Activated CD8-positive, alpha-beta T cell treated with anti-CD3 and anti-CD28 coated beads, Interleukin-2, amount 10 ng/mL, durations not matched to agents 7 days and 5 days (primary cell): ENCODE measurements at regions of chr21 and their contacts with region 1.

Region 1: GRCh38 chr21:33238565-33239255 is 9.0 kb downstream of the IFNAR2 start:
- DNase-seq: peak; percentile 23
- ATAC-seq: peak; percentile 54
- H3K4me3 Mint-ChIP-seq: peak overlapping the region; percentile 56
- H3K27ac Mint-ChIP-seq: peak overlapping the region; percentile 87
- H3K4me1 Mint-ChIP-seq: peaks cover 74% of the 10 kb centered on the region
- H3K27me3 Mint-ChIP-seq: no peaks in the 10 kb centered on the region

Region 2: DNA sequence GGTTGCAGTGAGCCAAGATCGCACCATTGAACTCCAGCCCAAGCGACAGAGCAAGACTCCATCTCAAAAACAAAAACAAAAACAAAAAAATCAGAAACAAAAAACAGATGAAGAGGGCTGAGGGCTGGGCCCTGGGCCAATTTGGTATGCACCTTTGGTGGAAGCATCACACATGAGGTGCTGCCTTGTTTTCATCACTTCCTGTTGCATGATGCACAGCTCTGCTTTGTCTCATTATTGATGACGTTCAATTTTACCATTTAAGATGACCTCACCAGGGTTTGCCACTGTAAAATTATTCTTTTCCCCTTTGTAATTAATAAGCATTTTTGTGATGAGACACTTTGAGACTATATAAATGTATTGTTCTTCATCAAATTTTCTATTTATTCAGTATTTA is 18.8 kb before region 1 on chr21:
- CTCF ChIA-PET with region 1: no interaction called
- POLR2A ChIA-PET with region 1: no interaction called
- DNase-seq: peak; percentile 48
- ATAC-seq: no peak
- H3K4me3 Mint-ChIP-seq: no peak overlapping the region
- H3K27ac Mint-ChIP-seq: no peak overlapping the region
- H3K4me1 Mint-ChIP-seq: peaks cover 45% of the 10 kb centered on the region
- H3K27me3 Mint-ChIP-seq: peaks cover 1% of the 10 kb centered on the region

Region 3: GRCh38 chr21:33266050-33266788 is 27.5 kb after region 1 on chr21 and contains the start of gene IL10RB:
- CTCF ChIA-PET with region 1: interaction called, 4 read pairs
- POLR2A ChIA-PET with region 1: interaction called, 13 read pairs
- DNase-seq: peak; percentile 74
- ATAC-seq: peak; percentile 89
- H3K4me3 Mint-ChIP-seq: peak within 1 kb of the TSS; percentile 96
- H3K27ac Mint-ChIP-seq: peak within 1 kb of the TSS; percentile 93
- H3K4me1 Mint-ChIP-seq: peaks cover 60% of the 10 kb centered on the region
- H3K27me3 Mint-ChIP-seq: no peaks in the 10 kb centered on the region
- total RNA-seq, gene IL10RB: 37.1 to 44.2 TPM